ENCODE measurements at regions of chr13 and their contacts with region 1.

Region 1: GRCh38 chr13:39577838-39578491 is 25.0 kb downstream of the LHFPL6 start:
- DNase-seq: no peak
- ATAC-seq: peak; percentile 24

Region 2: DNA sequence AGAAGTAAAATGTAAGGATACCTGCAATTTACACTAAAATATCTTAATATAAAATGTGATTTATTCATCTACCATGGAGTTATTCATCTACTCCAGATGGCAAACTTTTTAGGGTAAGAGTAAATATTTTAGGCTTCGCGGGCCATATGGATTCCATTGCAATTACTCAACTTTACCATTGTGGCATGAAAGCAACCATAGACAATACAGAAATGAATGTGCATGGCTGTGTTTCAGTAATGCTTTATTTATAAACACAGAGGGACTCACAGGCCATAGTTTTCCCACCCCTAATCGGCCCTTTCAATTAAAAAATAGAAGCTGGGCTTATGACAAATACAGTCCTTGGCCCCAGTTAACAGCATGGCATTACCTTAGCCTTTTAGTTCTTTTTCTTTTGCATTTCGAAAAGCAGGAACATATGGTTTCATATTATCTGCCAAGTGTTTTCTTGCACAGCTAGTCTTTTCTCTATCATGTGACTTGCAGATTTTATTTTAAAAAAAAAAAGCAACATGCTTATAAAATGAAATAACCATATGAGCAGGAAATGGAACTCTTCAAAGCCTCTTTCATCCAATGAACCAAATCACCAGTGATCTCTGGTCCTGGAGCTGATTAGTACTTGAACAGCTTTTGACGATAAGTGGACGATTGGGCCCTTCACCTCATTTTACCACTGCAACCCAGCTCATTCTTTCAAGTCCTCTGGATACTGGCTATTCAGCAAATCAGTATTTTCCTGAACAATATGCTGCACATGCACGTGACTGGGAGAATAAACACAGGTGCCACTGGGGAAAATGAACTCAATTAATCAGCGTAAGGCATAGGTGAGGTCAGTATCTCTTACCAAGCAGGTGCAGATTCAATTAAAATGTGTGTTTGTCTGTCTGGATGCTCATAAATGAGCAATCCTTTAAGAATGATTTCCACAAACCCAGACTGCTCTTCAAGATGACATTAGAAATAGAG is 38.9 kb before region 1 on chr13:
- intact Hi-C with region 1: loop called (anchors 5 kb)
- DNase-seq: no peak
- ATAC-seq: no peak

Region 3: DNA sequence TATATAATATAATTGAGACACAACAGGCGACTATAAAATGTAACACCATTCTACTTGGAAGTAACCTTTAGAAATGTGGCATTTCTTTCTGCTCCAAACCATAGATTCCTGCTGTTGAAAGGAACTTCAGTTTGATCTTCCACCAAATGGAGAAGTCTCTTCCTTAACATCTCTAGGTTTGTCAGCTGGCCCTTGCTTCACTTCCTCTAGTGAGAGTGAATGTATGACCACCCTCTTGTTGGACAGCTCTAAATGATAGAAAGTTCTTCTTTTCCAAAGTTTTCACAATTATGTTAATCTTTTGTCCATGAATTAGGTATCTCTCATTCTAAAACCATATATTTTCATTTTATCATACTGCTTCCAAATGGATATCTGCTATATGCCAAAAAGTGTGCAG is 63.7 kb after region 1 on chr13:
- intact Hi-C with region 1: no loop called
- DNase-seq: no peak
- ATAC-seq: no peak

Region 4: DNA sequence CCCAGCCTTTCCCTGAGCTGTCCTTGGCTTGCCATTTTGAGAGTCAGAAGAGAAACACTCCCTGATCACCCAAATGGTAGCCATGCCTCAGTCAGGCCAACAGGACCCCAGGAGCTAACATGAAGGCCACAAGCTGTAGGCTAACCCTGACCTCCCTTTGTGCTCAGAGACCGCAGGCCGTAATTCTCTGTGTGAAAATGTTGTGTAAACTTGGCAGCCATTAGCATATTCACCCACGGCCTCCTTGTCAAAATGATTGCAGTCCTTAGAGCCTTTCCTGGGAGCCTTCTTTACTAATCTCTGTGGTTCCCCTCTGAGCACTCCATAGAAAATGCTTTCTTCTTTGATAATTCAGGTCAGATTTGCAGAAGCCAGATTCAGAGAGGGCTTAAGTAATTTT is 496.4 kb after region 1 on chr13:
- intact Hi-C with region 1: no loop called
- DNase-seq: no peak
- ATAC-seq: peak; percentile 70

Measured in Right ventricle myocardium inferior (tissue), 1 donor.